ENCODE measurements at regions of chr11 and their contacts with region 1.

Region 1: DNA sequence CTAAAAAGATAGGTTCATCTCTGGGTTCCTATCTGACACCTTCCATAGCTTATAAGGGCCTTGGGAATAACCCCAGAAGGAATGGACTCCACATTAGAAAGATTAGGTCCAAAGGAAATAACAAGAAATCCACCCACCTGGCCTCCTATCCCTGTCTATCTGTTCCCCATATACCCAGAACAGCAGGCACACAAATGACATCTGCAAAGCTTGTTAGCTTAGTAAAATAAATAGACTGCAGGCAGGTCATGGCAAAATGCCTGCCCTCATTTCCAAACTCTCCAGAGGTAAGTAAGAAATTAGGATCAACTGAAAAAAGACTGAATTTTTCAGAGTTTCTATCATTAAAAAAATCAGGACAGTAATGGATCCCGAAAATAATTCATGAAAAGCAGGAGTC is 489.5 kb downstream of the DLG2 start:
- DNase-seq: no peak
- ATAC-seq: no peak
- H3K4me3 ChIP-seq: no peak overlapping the region
- H3K27ac ChIP-seq: no peak overlapping the region
- H3K4me1 ChIP-seq: no peaks in the 10 kb centered on the region
- H3K27me3 ChIP-seq: no peaks in the 10 kb centered on the region

Region 2: GRCh38 chr11:84655712-84656111 is 481.9 kb before region 1 on chr11:
- intact Hi-C with region 1: no loop called
- DNase-seq: no peak
- ATAC-seq: no peak
- H3K4me3 ChIP-seq: no peak overlapping the region
- H3K27ac ChIP-seq: no peak overlapping the region
- H3K4me1 ChIP-seq: no peaks in the 10 kb centered on the region
- H3K27me3 ChIP-seq: no peaks in the 10 kb centered on the region

Region 3: GRCh38 chr11:85206957-85207356 is 69.4 kb after region 1 on chr11:
- intact Hi-C with region 1: loop called in 1 of 2 experiments (anchors 2 kb)
- DNase-seq: no peak
- ATAC-seq: no peak
- H3K4me3 ChIP-seq: no peak overlapping the region
- H3K27ac ChIP-seq: no peak overlapping the region
- H3K4me1 ChIP-seq: no peaks in the 10 kb centered on the region
- H3K27me3 ChIP-seq: no peaks in the 10 kb centered on the region